ENCODE measurements at regions of chr6 and their contacts with region 1.

Region 1: DNA sequence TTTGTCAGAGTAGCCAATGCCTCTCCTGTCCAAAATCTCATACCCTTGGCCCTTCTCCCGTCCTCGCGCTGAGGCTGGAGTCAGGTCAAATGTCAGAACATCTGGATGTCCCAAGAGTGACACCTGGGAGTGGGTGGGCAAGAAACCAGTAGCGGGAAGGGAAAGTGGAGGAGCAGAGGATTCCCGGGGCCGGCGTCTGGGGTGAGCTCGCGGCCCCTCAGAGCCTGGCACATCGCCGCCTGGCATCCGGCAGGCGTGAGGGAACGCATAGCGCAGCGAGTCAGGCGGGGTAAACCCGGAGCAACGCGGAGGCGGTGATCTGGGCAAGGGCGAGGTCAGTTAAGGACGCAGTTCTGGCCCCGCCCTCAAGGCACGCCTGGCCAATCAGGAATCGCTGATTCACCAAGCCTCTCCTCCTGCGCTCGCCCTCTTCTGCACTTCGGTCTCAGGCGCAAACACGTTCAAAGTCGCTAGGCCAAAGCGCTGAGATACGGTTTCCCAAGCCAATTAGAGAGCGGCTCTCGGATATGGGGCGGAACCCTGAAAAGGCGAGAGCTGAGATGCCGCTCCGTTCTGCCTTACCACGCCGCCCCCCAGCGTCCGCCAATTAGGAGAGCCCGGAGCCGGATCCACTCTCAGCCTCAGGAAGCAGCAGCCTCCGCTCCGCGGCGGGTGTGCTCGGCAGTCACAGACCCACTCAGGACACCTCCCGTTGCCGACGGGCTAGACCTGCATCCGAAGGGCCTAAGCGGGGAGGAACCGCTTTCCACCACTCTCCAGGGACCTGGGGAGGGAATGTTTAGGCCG is 22.5 kb downstream of the VPS52 start:
- DNase-seq: peak; percentile 99
- ATAC-seq: peak; percentile 93
- H3K4me3 Mint-ChIP-seq: peak overlapping the region; percentile 90
- H3K27ac Mint-ChIP-seq: peak overlapping the region; percentile 94
- H3K4me1 Mint-ChIP-seq: peaks cover 37% of the 10 kb centered on the region
- H3K27me3 Mint-ChIP-seq: peaks cover 10% of the 10 kb centered on the region

Region 2: DNA sequence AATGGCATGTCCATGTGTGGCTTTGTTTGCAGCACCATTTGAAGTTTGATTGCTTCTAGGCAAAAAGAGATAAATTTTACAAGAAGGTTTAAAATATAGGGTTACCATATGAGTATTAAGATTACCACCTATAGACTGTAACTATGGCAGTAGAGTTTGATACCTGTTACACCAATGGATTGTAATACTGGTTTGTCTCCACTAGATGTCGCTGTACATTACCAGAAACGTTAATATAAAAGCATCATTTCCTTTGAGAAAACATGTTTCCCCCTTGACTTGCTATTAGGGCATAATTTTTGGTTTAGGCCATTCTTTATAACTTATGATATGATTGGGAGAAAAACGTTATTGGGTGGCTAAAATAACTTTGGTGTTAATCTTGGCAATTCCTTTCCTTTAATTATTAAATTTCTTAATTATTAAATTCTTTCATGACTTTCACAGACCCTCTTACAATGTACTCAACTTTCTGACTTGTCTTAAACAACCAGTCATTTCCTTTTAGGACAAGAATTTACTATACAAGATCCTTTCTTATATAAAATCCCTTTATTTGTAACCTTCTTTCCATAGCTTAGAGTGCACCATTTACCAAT is 130.5 kb before region 1 on chr6:
- CTCF ChIA-PET with region 1: interaction called, 47 read pairs
- DNase-seq: no peak
- ATAC-seq: peak; percentile 65
- H3K4me3 Mint-ChIP-seq: no peak overlapping the region
- H3K27ac Mint-ChIP-seq: no peak overlapping the region
- H3K4me1 Mint-ChIP-seq: peaks cover 20% of the 10 kb centered on the region
- H3K27me3 Mint-ChIP-seq: peaks cover 74% of the 10 kb centered on the region

Region 3: DNA sequence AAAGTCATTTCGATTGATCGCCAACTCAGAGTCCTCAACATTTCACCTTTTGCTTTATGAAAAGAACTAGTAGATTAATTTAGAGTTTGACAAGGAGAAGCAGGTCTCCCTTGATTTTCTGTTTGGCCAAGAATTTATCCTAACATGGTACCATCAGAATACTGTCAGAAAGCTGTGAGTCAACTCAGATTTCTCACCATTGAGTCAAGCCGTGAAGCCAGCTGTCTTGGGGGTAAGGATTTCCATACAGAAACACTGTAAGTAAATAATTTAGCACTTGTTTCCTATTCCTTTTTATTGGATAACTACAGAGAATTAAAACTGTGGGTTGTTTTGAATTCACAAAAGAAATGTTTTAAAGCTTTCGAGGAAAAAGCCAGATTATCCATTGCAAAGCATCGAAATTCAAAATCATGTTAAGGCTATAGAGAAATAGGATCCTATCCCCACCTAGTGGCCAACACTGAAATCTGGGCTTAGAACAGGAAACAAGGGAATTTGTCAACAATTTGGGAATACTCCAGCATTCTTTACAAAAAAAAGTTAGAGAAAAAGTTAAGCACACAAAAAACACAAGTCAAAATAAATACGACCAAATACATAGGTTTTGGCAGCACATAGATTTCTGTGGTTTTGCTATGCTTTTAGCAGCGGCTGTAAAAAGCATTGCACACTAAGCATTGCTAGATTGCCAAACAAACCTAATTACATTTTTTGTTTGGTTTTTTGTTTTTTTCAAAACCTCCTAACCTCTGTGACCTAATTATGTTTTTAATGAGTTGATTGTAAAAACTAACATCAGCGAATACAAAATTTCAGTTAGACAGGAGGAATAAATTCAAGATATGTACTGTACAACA is 101.1 kb before region 1 on chr6:
- CTCF ChIA-PET with region 1: interaction called, 23 read pairs
- DNase-seq: no peak
- ATAC-seq: no peak
- H3K4me3 Mint-ChIP-seq: no peak overlapping the region
- H3K27ac Mint-ChIP-seq: no peak overlapping the region
- H3K4me1 Mint-ChIP-seq: peaks cover 3% of the 10 kb centered on the region
- H3K27me3 Mint-ChIP-seq: peaks cover 38% of the 10 kb centered on the region

Region 4: GRCh38 chr6:33200219-33201146 is 48.6 kb before region 1 on chr6 and contains the starts of genes RXRB and SLC39A7:
- CTCF ChIA-PET with region 1: interaction called, 46 read pairs
- DNase-seq: peak; percentile 100
- ATAC-seq: peak; percentile 70
- H3K4me3 Mint-ChIP-seq: peak within 1 kb of the TSS; percentile 99
- H3K27ac Mint-ChIP-seq: peak within 1 kb of the TSS; percentile 97
- H3K4me1 Mint-ChIP-seq: peaks cover 66% of the 10 kb centered on the region
- H3K27me3 Mint-ChIP-seq: no peaks in the 10 kb centered on the region
- total RNA-seq, gene RXRB: 36.0 to 38.9 TPM
- total RNA-seq, gene SLC39A7: 50.1 to 63.9 TPM

Region 5: GRCh38 chr6:33235221-33235634 is 13.9 kb before region 1 on chr6:
- CTCF ChIA-PET with region 1: interaction called, 12 read pairs
- DNase-seq: no peak
- ATAC-seq: no peak
- H3K4me3 Mint-ChIP-seq: no peak overlapping the region
- H3K27ac Mint-ChIP-seq: no peak overlapping the region
- H3K4me1 Mint-ChIP-seq: no peaks in the 10 kb centered on the region
- H3K27me3 Mint-ChIP-seq: peaks cover 42% of the 10 kb centered on the region

Region 6: GRCh38 chr6:33276864-33277662 is 27.9 kb after region 1 on chr6 and contains the start of gene B3GALT4:
- CTCF ChIA-PET with region 1: interaction called, 33 read pairs
- DNase-seq: peak; percentile 88
- ATAC-seq: peak; percentile 72
- H3K4me3 Mint-ChIP-seq: peak within 1 kb of the TSS; percentile 88
- H3K27ac Mint-ChIP-seq: peak within 1 kb of the TSS; percentile 97
- H3K4me1 Mint-ChIP-seq: peaks cover 60% of the 10 kb centered on the region
- H3K27me3 Mint-ChIP-seq: no peaks in the 10 kb centered on the region
- total RNA-seq, gene B3GALT4: 14.0 to 20.5 TPM